Activated B cell treated with CpG ODN at 0.5 μM for 24 hours (primary cell): ENCODE measurements at regions of chr15 and their contacts with region 1.

Region 1: DNA sequence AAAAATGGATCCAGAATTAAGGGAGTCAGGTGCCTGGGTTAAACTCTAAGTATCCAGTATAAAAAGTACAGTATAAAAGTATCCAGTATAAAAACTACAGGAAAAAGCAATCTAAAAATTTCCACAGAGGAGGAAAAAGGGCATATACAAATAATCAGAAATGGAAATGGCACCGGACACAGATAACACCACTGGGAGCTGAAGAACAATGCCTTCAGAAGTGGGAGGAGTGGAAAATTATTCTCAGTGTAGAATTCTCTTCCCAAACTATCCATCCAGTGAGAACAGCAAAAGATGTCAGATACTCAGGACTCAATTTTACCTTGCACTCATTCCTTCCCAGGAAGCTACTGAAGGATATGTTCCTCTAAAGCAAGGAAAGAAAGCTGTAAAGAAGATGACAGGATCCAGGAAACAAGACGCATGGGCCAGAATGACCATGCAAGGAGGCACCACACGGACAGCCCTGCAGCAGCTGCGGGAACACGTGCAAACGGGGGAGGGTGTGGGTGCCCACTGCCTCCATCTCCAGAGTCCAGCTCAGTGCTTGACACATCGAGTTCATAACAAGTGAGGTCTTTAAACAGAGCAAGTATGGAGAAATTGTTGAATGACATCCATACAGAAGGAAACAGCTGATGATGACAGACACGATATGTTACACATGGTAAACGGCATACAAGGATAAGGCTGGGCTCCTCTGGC is 68.5 kb downstream of the CHSY1 start:
- DNase-seq: no peak
- ATAC-seq: no peak
- H3K4me3 Mint-ChIP-seq: no peak overlapping the region
- H3K27ac Mint-ChIP-seq: no peak overlapping the region
- H3K4me1 Mint-ChIP-seq: peaks cover 8% of the 10 kb centered on the region
- H3K27me3 Mint-ChIP-seq: no peaks in the 10 kb centered on the region
- CTCF ChIP-seq: no peak

Region 2: GRCh38 chr15:101167753-101168463 is 15.5 kb before region 1 on chr15:
- CTCF ChIA-PET with region 1: no interaction called
- POLR2A ChIA-PET with region 1: no interaction called
- intact Hi-C with region 1: loop called (anchors 2 kb)
- DNase-seq: no peak
- ATAC-seq: peak; percentile 52
- H3K4me3 Mint-ChIP-seq: peak overlapping the region; percentile 69
- H3K27ac Mint-ChIP-seq: peak overlapping the region; percentile 20
- H3K4me1 Mint-ChIP-seq: peaks cover 14% of the 10 kb centered on the region
- H3K27me3 Mint-ChIP-seq: no peaks in the 10 kb centered on the region
- CTCF ChIP-seq: no peak

Region 3: DNA sequence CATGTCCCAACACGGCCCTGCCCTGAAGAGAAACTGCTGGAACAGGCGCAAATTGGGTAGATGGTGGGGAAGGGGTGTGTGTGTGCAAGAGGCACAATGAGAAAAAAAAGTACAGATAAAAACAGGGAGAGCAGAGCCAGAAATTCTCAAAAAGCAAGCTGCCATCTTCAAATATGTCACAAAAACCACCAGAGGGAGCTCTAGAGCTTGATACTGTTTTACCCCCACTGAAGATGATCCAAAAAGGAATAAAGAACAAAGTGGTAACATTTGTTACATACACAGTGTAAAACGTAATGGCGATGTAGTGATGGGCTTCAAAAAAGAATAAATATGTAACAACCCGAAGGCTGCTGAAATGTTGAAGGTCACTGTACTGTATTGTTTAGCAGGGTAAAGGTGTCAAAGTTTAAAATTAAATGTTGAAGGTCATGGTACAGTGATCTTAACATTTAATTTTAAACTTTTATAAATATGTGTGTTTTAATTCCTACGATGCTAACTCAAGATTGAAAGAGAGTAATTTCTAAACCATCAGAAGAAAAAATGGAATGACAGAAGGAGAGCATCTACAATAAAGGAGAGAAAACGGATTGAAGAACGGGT is 105.6 kb after region 1 on chr15:
- CTCF ChIA-PET with region 1: no interaction called
- POLR2A ChIA-PET with region 1: no interaction called
- intact Hi-C with region 1: no loop called
- DNase-seq: no peak
- ATAC-seq: peak; percentile 40
- H3K4me3 Mint-ChIP-seq: no peak overlapping the region
- H3K27ac Mint-ChIP-seq: no peak overlapping the region
- H3K4me1 Mint-ChIP-seq: peaks cover 42% of the 10 kb centered on the region
- H3K27me3 Mint-ChIP-seq: no peaks in the 10 kb centered on the region
- CTCF ChIP-seq: no peak